Left ventricle myocardium superior (tissue), 1 donor: ENCODE measurements at regions of chr9 and their contacts with region 1.

Region 1: GRCh38 chr9:72823971-72824370 is 128.9 kb downstream of the ALDH1A1 start:
- DNase-seq: no peak
- ATAC-seq: no peak

Region 2: DNA sequence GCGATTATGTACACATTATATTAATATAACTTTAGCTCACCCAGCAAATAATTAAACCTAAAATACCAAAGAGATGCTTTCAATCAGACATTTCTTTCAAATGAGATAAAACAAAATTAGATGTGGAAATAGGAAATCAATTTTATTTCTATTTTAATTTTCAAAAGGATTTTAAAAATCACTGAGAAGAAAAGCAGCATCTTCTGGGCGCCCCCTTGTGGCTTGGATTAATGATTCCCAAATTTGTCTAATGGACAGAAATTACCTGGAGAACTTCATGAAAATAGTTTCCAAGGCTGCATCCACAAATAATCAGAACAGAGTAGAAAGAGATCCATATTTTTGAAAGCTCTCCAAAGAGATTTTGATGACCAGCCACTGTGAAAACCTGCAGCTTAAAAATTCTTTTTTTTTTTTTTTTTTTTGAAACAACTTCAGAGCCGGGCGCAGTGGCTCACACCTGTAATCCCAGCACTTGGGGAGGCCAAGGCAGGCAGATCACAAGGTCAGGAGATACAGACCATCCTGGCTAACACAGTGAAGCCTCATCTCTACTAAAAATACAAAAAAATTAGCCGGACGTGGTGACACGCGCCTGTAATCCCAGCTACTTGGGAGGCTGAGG is 1004.7 kb before region 1 on chr9:
- intact Hi-C with region 1: no loop called
- DNase-seq: no peak
- ATAC-seq: no peak

Region 3: GRCh38 chr9:72271613-72272478 is 552.1 kb before region 1 on chr9:
- intact Hi-C with region 1: loop called (anchors 5 kb)
- DNase-seq: no peak
- ATAC-seq: peak; percentile 65

Region 4: GRCh38 chr9:72292256-72292682 is 531.7 kb before region 1 on chr9:
- intact Hi-C with region 1: loop called (anchors 5 kb)
- DNase-seq: no peak
- ATAC-seq: peak; percentile 39

Region 5: GRCh38 chr9:72753266-72753893 is 70.6 kb before region 1 on chr9:
- intact Hi-C with region 1: no loop called
- DNase-seq: no peak
- ATAC-seq: no peak

Region 6: DNA sequence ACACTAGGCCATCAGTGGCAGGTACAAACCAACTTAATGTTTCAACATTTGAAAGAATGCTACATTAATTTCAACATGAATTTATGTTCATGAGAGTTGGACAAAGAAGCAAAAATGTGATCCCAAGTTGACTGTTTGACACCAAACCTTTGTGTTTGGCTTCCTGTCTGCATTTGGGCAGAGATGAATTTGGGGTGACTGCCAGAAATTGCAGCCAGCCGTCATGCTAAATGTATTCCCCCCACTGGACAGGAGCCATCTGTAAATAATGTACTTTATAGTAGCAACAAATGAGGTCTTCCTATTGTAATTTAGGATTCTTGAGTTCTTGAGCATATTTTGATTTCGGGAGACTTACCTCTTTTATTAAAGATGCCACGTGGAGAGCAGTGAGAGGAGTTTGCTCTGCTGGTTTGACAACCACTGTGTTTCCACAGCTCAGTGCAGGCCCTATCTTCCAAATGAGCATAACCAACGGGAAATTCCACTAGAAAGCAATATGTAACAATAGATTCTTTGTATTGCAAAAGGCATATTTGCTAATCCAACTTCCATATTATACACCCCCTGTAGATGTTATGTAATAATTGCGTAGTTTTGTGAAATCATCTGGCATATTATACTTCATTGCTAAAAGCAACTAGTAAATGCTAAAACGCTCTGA is 101.3 kb after region 1 on chr9:
- intact Hi-C with region 1: no loop called
- DNase-seq: no peak
- ATAC-seq: peak; percentile 54